Aorta (tissue), 5 donors: ENCODE measurements at regions of chr9 and their contacts with region 1.

Region 1: GRCh38 chr9:130997925-130998596 is 10.9 kb upstream of the LAMC3 start:
- DNase-seq: peak; percentile 74 to 91
- ATAC-seq: peak; percentile 52
- H3K4me3 ChIP-seq: no peak overlapping the region
- H3K27ac ChIP-seq: no peak overlapping the region
- H3K4me1 ChIP-seq: no peaks in the 10 kb centered on the region
- H3K27me3 ChIP-seq: no peaks in the 10 kb centered on the region

Region 2: GRCh38 chr9:130707225-130707976 is 290.7 kb before region 1 on chr9:
- intact Hi-C with region 1: loop called in 1 of 2 experiments (anchors 5 kb)
- DNase-seq: peak; percentile 71 to 83
- ATAC-seq: no peak
- H3K4me3 ChIP-seq: no peak overlapping the region
- H3K27ac ChIP-seq: no peak overlapping the region
- H3K4me1 ChIP-seq: no peaks in the 10 kb centered on the region
- H3K27me3 ChIP-seq: no peaks in the 10 kb centered on the region

Region 3: GRCh38 chr9:130877300-130877699 is 120.8 kb before region 1 on chr9:
- intact Hi-C with region 1: loop called in 1 of 2 experiments (anchors 2 kb)
- DNase-seq: no peak
- ATAC-seq: no peak
- H3K4me3 ChIP-seq: no peak overlapping the region
- H3K27ac ChIP-seq: no peak overlapping the region
- H3K4me1 ChIP-seq: peaks cover 0 to 3% of the 10 kb centered on the region in 2 donors
- H3K27me3 ChIP-seq: no peaks in the 10 kb centered on the region

Region 4: GRCh38 chr9:131076347-131077195 is 78.5 kb after region 1 on chr9:
- intact Hi-C with region 1: no loop called
- DNase-seq: no peak
- ATAC-seq: no peak
- H3K4me3 ChIP-seq: no peak overlapping the region
- H3K27ac ChIP-seq: no peak overlapping the region
- H3K4me1 ChIP-seq: no peaks in the 10 kb centered on the region
- H3K27me3 ChIP-seq: no peaks in the 10 kb centered on the region